GM13977 (cell line): ENCODE measurements at regions of chr5 and their contacts with region 1.

Region 1: DNA sequence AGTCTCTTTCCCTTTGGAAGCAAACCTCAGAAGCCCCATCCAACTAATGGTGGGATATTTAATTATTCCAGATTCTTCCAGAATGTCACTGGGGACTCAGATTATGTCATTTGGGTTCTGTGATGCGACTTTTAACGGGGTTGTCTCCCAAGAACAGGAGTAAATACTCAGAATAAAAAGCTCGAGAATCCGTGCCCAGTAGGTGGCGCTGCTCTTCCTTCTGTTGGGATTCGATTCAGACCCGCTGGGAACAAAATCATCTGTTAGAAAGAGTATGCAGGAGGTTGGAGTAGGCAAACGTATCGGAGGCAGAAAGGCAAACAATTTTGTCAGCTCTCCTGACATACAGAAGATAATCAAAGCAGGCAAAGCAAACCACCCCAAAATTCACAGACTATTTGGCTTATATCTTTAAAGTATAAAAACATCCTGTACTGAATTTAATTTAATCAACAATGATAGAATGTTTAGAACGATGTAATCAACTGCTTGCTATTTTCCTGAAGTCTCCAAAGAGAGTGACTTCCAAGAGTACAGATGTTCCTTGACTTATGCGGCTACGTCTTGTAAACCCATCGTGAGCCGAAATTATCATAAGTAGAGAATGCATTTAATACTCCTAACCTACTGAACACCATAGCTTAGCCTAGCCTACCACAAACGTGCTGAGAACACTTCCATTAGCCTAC is 169.8 kb upstream of the RAI14 start:
- DNase-seq: peak; percentile 74
- CTCF ChIP-seq: peak; percentile 88

Region 2: DNA sequence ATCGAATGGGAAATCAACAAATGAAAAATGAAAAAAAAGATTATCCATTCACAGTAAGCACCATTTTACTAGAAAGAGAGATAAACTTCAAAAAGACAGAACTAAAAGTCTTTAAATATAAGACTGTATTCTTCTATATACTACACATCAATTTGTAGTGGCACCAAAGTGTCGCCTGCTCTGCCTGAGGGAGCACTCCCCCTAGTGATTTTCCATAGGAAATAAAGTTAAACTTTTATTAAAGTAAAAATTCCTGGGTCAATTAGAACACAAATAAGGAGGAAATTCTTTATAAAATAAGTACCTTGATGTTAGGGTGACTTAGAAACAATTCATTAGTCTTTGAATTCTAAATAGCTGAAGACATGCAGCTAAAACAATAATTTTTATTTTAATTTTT is 419.3 kb after region 1 on chr5:
- in situ Hi-C with region 1: loop called (anchors 10 kb)
- DNase-seq: no peak
- CTCF ChIP-seq: peak; percentile 17